ENCODE measurements at regions of chr19 and their contacts with region 1.

Region 1: DNA sequence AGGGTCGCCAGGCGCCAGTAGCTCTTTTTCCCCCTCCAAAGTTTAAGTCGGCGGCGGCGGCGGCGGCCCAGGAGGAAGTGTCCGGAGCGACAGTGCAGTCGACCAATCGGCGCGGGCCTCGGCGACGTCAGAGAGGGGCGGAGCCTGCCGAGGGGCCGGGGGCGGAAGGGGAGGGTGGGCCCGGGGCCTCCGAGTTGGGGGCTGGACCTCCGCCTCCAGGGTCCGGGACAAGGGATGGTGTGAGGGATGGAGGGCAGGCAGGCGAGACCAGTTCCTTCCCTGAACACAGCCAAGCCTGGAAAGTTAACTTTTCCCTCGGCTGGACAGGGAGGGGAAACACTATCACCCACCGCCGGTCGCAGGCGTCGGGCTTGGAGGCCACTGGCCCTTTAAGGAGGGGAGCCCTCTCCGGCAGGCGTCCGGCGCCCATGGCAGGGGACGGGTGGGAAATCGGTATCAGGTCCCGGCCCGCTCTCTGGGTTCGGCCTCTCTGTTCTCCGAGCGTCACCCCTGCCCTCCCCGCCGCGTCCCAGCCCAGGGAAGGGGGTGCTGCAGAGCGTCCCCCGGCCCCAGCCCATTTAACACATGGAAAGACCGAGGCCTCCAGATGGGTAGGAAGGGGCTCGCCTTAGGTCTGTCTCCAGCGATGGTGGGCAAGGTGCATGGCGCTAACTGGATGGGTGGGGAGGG is at the start of gene PRKD2:
- DNase-seq: peak; percentile 92
- ATAC-seq: peak; percentile 47
- H3K4me3 Mint-ChIP-seq: peak within 1 kb of the TSS; percentile 94
- H3K27ac Mint-ChIP-seq: peak within 1 kb of the TSS; percentile 97
- H3K4me1 Mint-ChIP-seq: peaks cover 76% of the 10 kb centered on the region
- H3K27me3 Mint-ChIP-seq: no peaks in the 10 kb centered on the region
- CTCF ChIP-seq: no peak
- total RNA-seq, gene PRKD2: 157 and 191 TPM in 2 replicates

Region 2: GRCh38 chr19:46614114-46614722 is 103.0 kb before region 1 on chr19:
- CTCF ChIA-PET with region 1: no interaction called
- POLR2A ChIA-PET with region 1: interaction called, 17 read pairs
- intact Hi-C with region 1: loop called (anchors 2 kb)
- DNase-seq: peak; percentile 82
- ATAC-seq: peak; percentile 71
- H3K4me3 Mint-ChIP-seq: no peak overlapping the region
- H3K27ac Mint-ChIP-seq: peak overlapping the region; percentile 63
- H3K4me1 Mint-ChIP-seq: peaks cover 66% of the 10 kb centered on the region
- H3K27me3 Mint-ChIP-seq: no peaks in the 10 kb centered on the region
- CTCF ChIP-seq: peak; percentile 42

Region 3: DNA sequence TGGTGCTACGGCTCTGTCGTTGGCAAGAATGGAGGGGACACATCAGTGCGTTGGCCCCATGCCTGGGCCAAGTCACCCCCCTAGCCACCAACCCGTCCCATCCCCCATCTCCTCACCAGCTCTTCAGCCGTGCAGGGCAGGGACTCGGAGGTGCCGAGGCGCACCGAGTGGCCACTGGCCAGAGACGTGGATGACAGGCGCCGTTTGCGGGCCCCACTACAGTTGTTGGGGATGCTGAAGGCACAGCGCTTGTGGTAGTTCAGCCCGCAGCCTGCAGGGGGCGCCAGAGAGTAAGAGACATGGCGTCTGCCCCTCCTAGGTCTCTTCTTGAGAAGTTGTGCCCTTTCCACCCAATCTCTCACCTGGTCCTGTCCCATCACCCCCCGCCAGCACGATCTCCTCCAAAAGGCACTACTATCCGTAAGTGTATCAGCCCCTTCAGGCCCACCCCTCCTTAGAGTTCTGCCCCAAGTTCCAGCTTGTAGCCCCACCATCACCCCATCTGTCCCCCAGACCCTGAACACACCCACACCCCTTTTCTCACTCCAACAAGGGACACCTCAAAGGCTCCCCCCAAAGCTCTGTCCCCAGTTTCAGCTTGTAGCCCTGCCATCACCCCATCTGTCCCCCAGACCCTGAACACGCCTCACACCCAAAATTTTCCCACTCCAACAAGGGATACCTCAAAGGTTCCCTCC is 12.7 kb before region 1 on chr19:
- CTCF ChIA-PET with region 1: interaction called, 32 read pairs
- POLR2A ChIA-PET with region 1: interaction called, 11 read pairs
- intact Hi-C with region 1: loop called (anchors 1 kb)
- DNase-seq: peak; percentile 86
- ATAC-seq: peak; percentile 95
- H3K4me3 Mint-ChIP-seq: no peak overlapping the region
- H3K27ac Mint-ChIP-seq: peak overlapping the region; percentile 18
- H3K4me1 Mint-ChIP-seq: peaks cover 6% of the 10 kb centered on the region
- H3K27me3 Mint-ChIP-seq: no peaks in the 10 kb centered on the region
- CTCF ChIP-seq: peak; percentile 71

Region 4: GRCh38 chr19:46741447-46741846 is 24.3 kb after region 1 on chr19:
- CTCF ChIA-PET with region 1: no interaction called
- POLR2A ChIA-PET with region 1: interaction called, 11 read pairs
- intact Hi-C with region 1: loop called (anchors 2 kb)
- DNase-seq: no peak
- ATAC-seq: no peak
- H3K4me3 Mint-ChIP-seq: no peak overlapping the region
- H3K27ac Mint-ChIP-seq: no peak overlapping the region
- H3K4me1 Mint-ChIP-seq: peaks cover 48% of the 10 kb centered on the region
- H3K27me3 Mint-ChIP-seq: no peaks in the 10 kb centered on the region
- CTCF ChIP-seq: no peak

Region 5: DNA sequence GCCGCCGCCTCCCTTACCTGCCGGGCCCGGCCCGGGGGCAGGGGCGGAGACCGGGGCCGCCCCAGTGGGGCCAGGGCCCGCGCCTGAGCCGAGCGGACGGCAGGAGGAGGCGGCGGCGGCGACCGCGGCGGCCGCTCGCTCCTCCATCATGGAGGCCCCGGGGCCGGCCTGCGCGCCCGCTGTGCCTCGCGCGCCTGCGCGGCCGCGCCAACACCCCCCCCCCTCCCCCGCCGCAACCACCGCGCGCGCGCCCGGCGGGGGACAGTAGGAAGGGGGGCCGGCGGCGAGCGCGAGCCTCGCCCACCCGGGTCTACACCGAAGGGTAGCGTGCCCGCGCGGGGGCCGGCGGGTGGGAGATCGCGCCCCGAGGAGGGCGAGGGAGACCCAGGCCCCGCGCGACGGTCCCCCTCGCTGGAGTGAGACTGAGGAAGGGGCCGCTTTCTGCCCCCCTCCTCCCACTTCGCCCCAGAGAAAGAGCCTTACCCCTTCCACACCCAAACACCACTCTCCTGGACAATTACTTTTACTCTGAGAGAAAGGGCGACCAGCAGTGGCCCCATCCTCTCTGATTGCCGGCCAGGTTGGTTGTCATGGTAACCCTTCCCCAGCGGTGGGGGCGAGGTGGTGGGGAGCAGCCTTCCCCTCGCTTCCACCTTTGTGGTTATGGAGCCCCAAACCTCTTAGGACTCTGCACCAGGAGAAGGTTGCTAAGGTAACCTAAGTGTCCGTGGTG is 29.3 kb after region 1 on chr19 and contains the start of gene STRN4:
- CTCF ChIA-PET with region 1: no interaction called
- POLR2A ChIA-PET with region 1: interaction called, 11 read pairs
- intact Hi-C with region 1: loop called (anchors 2 kb)
- DNase-seq: peak; percentile 51
- ATAC-seq: peak; percentile 66
- H3K4me3 Mint-ChIP-seq: peak within 1 kb of the TSS; percentile 94
- H3K27ac Mint-ChIP-seq: peak within 1 kb of the TSS; percentile 83
- H3K4me1 Mint-ChIP-seq: peaks cover 64% of the 10 kb centered on the region
- H3K27me3 Mint-ChIP-seq: no peaks in the 10 kb centered on the region
- CTCF ChIP-seq: no peak
- total RNA-seq, gene STRN4: 83.9 and 90.4 TPM in 2 replicates

Measured in activated B cell treated with CpG ODN at 0.5 μM for 24 hours (primary cell).